Activated T-helper 1 cell treated with anti-CD3 and anti-CD28 coated beads, Interleukin-12 subunit alpha, Interleukin-12 subunit beta, Interleukin-2, Interleukin-4 antibody, amounts not matched to agents 30 ng/mL and 10 ng/mL and 1 ng/mL, durations not matched to agents 14 hours and 24 hours and 36 hours (primary cell): ENCODE measurements at regions of chr16 and their contacts with region 1.

Region 1: GRCh38 chr16:29700253-29700987 is 21.4 kb downstream of the QPRT start:
- DNase-seq: peak; percentile 59
- H3K4me3 Mint-ChIP-seq: peak overlapping the region; percentile 43
- H3K27ac Mint-ChIP-seq: peak overlapping the region; percentile 90
- H3K4me1 Mint-ChIP-seq: peaks cover 30% of the 10 kb centered on the region
- H3K27me3 Mint-ChIP-seq: no peaks in the 10 kb centered on the region

Region 2: DNA sequence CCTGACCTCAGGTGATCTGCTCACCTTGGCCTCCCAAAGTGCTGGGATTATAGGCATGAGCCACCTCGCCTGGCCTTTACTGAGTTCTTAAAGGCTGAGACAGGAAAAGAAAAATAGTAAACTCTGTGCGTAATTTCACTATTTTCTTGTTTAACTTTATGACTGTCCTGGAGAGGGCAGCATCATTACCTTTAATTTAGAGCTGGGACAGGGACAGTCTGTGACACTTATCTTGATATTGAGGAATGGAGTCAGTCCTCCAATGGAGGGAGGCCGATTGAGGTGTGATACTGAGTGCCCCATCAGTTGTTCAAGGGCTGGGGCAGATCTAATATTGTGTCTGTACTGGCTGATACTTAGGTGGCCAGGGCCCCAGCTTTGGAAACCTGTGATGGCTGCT is 58.9 kb before region 1 on chr16:
- intact Hi-C with region 1: loop called (anchors 2 kb)
- DNase-seq: no peak
- H3K4me3 Mint-ChIP-seq: no peak overlapping the region
- H3K27ac Mint-ChIP-seq: peak overlapping the region; percentile 26
- H3K4me1 Mint-ChIP-seq: peaks cover 42% of the 10 kb centered on the region
- H3K27me3 Mint-ChIP-seq: no peaks in the 10 kb centered on the region

Region 3: DNA sequence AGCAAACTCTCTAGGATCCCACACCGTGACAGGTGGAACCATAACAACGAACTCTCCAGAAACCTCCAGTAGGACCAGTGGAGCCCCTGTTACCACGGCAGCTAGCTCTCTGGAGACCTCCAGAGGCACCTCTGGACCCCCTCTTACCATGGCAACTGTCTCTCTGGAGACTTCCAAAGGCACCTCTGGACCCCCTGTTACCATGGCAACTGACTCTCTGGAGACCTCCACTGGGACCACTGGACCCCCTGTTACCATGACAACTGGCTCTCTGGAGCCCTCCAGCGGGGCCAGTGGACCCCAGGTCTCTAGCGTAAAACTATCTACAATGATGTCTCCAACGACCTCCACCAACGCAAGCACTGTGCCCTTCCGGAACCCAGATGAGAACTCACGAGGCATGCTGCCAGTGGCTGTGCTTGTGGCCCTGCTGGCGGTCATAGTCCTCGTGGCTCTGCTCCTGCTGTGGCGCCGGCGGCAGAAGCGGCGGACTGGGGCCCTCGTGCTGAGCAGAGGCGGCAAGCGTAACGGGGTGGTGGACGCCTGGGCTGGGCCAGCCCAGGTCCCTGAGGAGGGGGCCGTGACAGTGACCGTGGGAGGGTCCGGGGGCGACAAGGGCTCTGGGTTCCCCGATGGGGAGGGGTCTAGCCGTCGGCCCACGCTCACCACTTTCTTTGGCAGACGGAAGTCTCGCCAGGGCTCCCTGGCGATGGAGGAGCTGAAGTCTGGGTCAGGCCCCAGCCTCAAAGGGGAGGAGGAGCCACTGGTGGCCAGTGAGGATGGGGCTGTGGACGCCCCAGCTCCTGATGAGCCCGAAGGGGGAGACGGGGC is 36.1 kb before region 1 on chr16:
- intact Hi-C with region 1: no loop called
- DNase-seq: peak; percentile 29
- H3K4me3 Mint-ChIP-seq: peak overlapping the region; percentile 95
- H3K27ac Mint-ChIP-seq: peak overlapping the region; percentile 95
- H3K4me1 Mint-ChIP-seq: peaks cover 64% of the 10 kb centered on the region
- H3K27me3 Mint-ChIP-seq: no peaks in the 10 kb centered on the region

Region 4: DNA sequence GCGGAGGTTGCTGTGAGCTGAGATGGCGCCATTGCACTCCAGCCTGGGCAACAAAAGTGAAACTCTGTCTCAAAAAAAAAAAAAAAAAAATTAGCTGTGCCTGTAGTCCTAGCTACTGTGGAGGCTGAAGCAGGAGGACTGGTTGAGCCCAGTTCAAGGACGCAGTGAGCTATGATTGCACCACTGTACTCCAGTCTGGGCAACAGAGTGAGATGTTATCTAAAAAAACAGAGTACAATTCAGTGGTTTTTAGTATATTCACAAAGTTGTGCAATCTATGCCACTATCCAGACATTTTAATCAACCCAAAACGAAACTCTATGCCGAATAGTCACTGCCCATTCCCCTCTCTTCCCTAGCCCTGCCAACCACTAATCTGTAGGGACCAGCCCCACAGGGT is 20.3 kb after region 1 on chr16:
- intact Hi-C with region 1: loop called (anchors 1 kb)
- DNase-seq: no peak
- H3K4me3 Mint-ChIP-seq: no peak overlapping the region
- H3K27ac Mint-ChIP-seq: no peak overlapping the region
- H3K4me1 Mint-ChIP-seq: peaks cover 9% of the 10 kb centered on the region
- H3K27me3 Mint-ChIP-seq: no peaks in the 10 kb centered on the region

Region 5: DNA sequence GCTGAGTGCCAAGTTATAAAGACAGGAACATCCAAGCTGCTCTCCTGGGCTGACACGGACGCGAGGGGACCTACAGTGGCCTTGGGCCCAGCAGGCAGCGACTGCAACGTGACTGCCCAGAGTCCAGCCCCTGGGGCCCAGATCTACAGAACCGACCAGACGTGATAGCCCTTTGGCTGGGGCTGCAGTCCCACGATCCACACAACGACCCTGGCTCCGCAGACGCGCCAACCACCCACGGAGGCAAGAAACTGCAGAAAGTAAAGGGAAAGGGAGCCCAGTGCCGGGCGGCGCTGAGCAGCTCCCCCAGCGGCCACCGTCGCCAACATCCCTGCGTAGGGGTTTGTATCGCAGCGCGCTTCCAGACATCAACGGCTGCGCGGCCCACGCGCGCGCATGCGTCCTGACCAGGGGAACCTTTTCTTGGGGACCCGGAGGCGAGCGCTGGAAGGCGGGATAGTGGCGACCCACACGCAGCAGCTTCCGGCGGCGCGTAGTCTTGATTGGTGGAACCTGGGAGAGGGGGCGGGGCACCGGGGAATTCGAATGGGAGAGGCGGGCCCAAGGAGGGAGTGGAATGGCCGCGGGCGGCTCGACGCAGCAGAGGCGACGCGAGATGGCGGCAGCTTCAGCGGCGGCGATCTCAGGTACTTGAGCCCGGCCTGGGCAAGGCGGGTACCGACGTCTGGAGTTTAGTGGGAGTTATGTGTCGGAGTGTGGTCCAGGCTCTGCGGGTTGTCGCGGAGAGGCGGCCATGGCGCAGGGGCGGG is 89.9 kb after region 1 on chr16 and contains the start of gene KIF22:
- intact Hi-C with region 1: loop called (anchors 1 kb)
- DNase-seq: peak; percentile 100
- H3K4me3 Mint-ChIP-seq: peak within 1 kb of the TSS; percentile 99
- H3K27ac Mint-ChIP-seq: peak within 1 kb of the TSS; percentile 97
- H3K4me1 Mint-ChIP-seq: peaks cover 44% of the 10 kb centered on the region
- H3K27me3 Mint-ChIP-seq: no peaks in the 10 kb centered on the region
- total RNA-seq, gene KIF22: 134 and 140 TPM in 2 replicates

Region 6: GRCh38 chr16:30005341-30006094 is 305.1 kb after region 1 on chr16:
- intact Hi-C with region 1: loop called (anchors 5 kb)
- DNase-seq: no peak
- H3K4me3 Mint-ChIP-seq: no peak overlapping the region
- H3K27ac Mint-ChIP-seq: no peak overlapping the region
- H3K4me1 Mint-ChIP-seq: no peaks in the 10 kb centered on the region
- H3K27me3 Mint-ChIP-seq: peaks cover 14% of the 10 kb centered on the region